Right ventricle myocardium inferior (tissue), 1 donor: ENCODE measurements at regions of chr1 and their contacts with region 1.

Region 1: GRCh38 chr1:218323568-218324225 is 21.4 kb upstream of the TGFB2 start:
- DNase-seq: no peak
- ATAC-seq: no peak

Region 2: DNA sequence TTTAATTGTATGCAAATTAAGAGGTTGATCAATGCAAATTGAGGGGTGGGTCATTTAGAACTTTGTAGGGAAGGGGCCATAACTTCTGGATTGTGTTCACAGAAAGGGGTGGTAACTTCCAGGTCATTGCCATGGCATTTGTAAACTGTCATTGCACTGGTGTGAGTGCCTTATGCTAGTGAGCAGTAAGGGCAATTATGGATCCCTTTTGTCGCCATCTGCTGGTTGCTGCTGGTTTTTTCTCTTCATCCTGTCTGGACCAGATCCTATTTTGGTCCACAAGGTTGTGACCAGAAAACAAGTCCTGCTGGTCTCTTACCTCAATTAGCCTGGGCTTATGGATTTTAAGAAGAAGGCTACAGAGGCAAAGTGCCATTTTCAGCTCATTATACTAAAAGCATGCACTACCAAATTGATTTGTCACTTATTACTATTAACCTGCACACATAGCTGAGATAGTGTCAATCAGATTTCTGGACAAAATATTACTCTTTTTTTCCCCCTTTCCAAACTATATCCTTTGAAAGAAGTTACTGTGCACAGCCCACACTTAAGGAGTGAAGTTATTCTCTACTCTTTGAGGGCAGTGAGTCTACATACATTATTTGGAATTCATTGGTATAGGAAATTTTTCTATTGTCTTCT is 1093.0 kb after region 1 on chr1:
- intact Hi-C with region 1: loop called (anchors 10 kb)
- DNase-seq: no peak
- ATAC-seq: peak; percentile 43